Sigmoid colon (tissue), 7 donors: ENCODE measurements at regions of chr18 and their contacts with region 1.

Region 1: GRCh38 chr18:63346031-63346430 is 21.0 kb downstream of the KDSR start:
- DNase-seq: peak; percentile 83
- H3K4me3 ChIP-seq: no peak overlapping the region
- H3K27ac ChIP-seq: peak overlapping the region; percentile 39 to 80 (median 68)
- H3K4me1 ChIP-seq: peaks cover 0 to 26% (median 23%) of the 10 kb centered on the region in 4 donors
- H3K27me3 ChIP-seq: no peaks in the 10 kb centered on the region
- CTCF ChIP-seq: no peak
- EP300 ChIP-seq: no peak
- POLR2A ChIP-seq: no peak

Region 2: DNA sequence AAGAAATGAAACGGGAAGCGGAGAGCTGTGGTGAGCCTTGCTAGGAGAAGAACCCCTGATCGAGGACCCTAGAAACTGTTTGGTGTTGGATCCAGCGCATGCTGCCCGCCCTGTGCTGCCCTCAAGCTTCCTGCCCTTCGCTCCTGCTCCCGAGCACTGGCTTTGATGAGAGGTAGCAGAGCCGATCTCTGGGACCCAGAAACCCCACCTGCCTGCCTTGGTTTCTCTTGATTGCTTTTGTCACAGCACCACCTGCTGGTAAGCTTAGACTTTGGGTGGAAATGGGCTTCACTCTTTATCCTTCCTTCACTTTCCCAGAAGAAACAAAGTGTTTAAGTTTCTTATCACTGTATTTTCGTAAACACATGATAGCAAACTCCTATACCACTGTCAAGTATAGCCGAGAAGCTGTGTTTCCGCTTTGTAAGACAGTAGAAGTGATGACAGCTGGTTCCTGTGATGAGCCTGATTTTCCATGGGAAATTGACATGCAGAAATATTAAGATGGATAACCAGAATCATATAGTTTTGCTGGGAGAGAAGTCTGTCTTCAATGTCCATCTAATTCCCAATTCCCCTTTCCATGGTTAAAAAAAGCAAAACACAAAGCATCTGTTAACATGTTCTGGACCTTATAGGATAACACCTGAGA is 363.3 kb before region 1 on chr18:
- intact Hi-C with region 1: no loop called
- DNase-seq: peak; percentile 79
- H3K4me3 ChIP-seq: peak overlapping the region in 3 of 4 donors; percentile 21 to 43 (median 42)
- H3K27ac ChIP-seq: no peak overlapping the region
- H3K4me1 ChIP-seq: peaks cover 0 to 8% (median 6%) of the 10 kb centered on the region in 4 donors
- H3K27me3 ChIP-seq: no peaks in the 10 kb centered on the region
- CTCF ChIP-seq: peak; percentile 67 to 75 (median 70)
- EP300 ChIP-seq: no peak
- POLR2A ChIP-seq: no peak

Region 3: GRCh38 chr18:63422087-63422809 is 76.2 kb after region 1 on chr18 and contains the start of gene VPS4B:
- intact Hi-C with region 1: loop called (anchors 5 kb)
- DNase-seq: peak; percentile 100
- H3K4me3 ChIP-seq: peak within 1 kb of the TSS; percentile 68 to 89 (median 84)
- H3K27ac ChIP-seq: peak within 1 kb of the TSS; percentile 90 to 96 (median 92)
- H3K4me1 ChIP-seq: peaks cover 0 to 18% (median 15%) of the 10 kb centered on the region in 4 donors
- H3K27me3 ChIP-seq: no peaks in the 10 kb centered on the region
- CTCF ChIP-seq: no peak
- EP300 ChIP-seq: peak in 2 of 4 donors; percentile 51 to 81
- POLR2A ChIP-seq: peak; percentile 43 to 78
- total RNA-seq, gene VPS4B: 31.4 to 41.0 (median 38.3) TPM

Region 4: DNA sequence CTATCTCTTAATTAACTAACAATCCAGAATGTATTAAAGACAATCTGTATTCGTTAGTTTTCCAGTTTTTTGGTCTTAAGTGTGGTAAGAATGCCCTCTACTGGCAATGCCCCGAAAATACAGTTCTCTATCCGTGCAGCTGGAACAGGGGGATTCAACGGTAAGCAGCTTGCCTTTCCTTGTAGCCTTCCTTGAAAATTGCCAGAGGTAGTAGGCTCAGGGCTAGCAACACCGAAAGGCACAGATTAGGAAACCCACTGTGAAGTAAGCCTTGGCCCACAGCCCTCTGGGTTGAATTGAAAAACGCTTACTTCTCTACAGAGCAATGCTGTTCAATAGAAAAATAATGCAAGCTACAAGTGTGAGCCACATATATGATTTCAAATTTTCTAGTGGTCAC is 93.3 kb after region 1 on chr18:
- intact Hi-C with region 1: loop called (anchors 5 kb)
- DNase-seq: peak; percentile 76
- H3K4me3 ChIP-seq: no peak overlapping the region
- H3K27ac ChIP-seq: peak overlapping the region in 2 of 4 donors; percentile 24 to 32
- H3K4me1 ChIP-seq: peaks cover 0 to 25% (median 11%) of the 10 kb centered on the region in 4 donors
- H3K27me3 ChIP-seq: no peaks in the 10 kb centered on the region
- CTCF ChIP-seq: peak; percentile 54 to 80 (median 76)
- EP300 ChIP-seq: no peak
- POLR2A ChIP-seq: no peak